GM12878 (cell line): ENCODE measurements at regions of chr19 and their contacts with region 1.

Region 1: DNA sequence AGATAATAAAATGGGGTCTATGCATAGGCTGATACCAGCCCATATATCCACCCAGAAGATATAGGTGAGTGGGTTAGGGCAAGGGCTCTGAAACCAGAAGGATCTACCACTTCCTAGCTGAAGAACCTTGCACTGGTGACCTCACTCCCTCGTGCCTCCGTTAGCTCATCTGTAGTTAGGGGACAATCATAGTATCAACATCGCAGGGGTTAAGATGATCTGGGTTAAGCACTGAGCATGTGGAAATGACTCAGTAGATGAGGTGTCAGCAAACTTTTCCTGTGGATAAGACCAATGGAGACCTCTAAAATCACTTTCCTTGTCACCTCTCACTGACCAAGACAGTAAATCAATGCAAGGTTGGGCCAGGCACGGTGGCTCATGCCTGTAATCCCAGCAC is 30.5 kb downstream of the TNFSF14 start:
- DNase-seq: no peak
- ATAC-seq: peak; percentile 17
- H3K4me3 ChIP-seq: no peak overlapping the region
- H3K27ac ChIP-seq: peak overlapping the region; percentile 13
- H3K4me1 ChIP-seq: peaks cover 30% of the 10 kb centered on the region
- H3K27me3 ChIP-seq: no peaks in the 10 kb centered on the region
- CTCF ChIP-seq: no peak
- EP300 ChIP-seq: no peak
- POLR2A ChIP-seq: no peak
- RAD21 ChIP-seq: no peak

Region 2: GRCh38 chr19:6510618-6511017 is 128.8 kb before region 1 on chr19:
- CTCF ChIA-PET with region 1: no interaction called
- POLR2A ChIA-PET with region 1: no interaction called
- RAD21 ChIA-PET with region 1: no interaction called
- SMC1A ChIA-PET with region 1: no interaction called
- in situ Hi-C with region 1: no loop called
- intact Hi-C with region 1: no loop called
- DNase-seq: no peak
- ATAC-seq: no peak
- H3K4me3 ChIP-seq: no peak overlapping the region
- H3K27ac ChIP-seq: no peak overlapping the region
- H3K4me1 ChIP-seq: 0 out of 2 replicates have a peak, but pooled peaks cover 3% of the 10 kb centered on the region
- H3K27me3 ChIP-seq: no peaks in the 10 kb centered on the region
- CTCF ChIP-seq: no peak
- EP300 ChIP-seq: no peak
- POLR2A ChIP-seq: no peak
- RAD21 ChIP-seq: no peak

Region 3: GRCh38 chr19:6654347-6655310 is 15.2 kb after region 1 on chr19:
- CTCF ChIA-PET with region 1: interaction called, 4 read pairs
- POLR2A ChIA-PET with region 1: interaction called, 20 read pairs
- RAD21 ChIA-PET with region 1: interaction called, 10 read pairs
- SMC1A ChIA-PET with region 1: interaction called, 58 read pairs
- in situ Hi-C with region 1: no loop called
- intact Hi-C with region 1: no loop called
- DNase-seq: no peak
- ATAC-seq: peak; percentile 91
- H3K4me3 ChIP-seq: peak overlapping the region; percentile 37; the same call in 1 of the 2 replicates
- H3K27ac ChIP-seq: peak overlapping the region; percentile 85
- H3K4me1 ChIP-seq: peaks cover 17% of the 10 kb centered on the region
- H3K27me3 ChIP-seq: no peaks in the 10 kb centered on the region
- CTCF ChIP-seq: no peak
- EP300 ChIP-seq: no peak
- POLR2A ChIP-seq: no peak
- RAD21 ChIP-seq: no peak

Region 4: GRCh38 chr19:6663236-6664201 is 24.1 kb after region 1 on chr19:
- CTCF ChIA-PET with region 1: interaction called, 9 read pairs
- POLR2A ChIA-PET with region 1: interaction called, 8 read pairs
- RAD21 ChIA-PET with region 1: interaction called, 41 read pairs
- SMC1A ChIA-PET with region 1: interaction called, 14 read pairs
- in situ Hi-C with region 1: no loop called
- intact Hi-C with region 1: no loop called
- DNase-seq: no peak
- ATAC-seq: peak; percentile 8; the same call in 2 of the 3 replicates
- H3K4me3 ChIP-seq: no peak overlapping the region
- H3K27ac ChIP-seq: peak overlapping the region; percentile 40; the same call in 1 of the 2 replicates
- H3K4me1 ChIP-seq: peaks cover 26% of the 10 kb centered on the region
- H3K27me3 ChIP-seq: no peaks in the 10 kb centered on the region
- CTCF ChIP-seq: no peak
- EP300 ChIP-seq: no peak
- POLR2A ChIP-seq: no peak; the same call in 1 of the 2 replicates
- RAD21 ChIP-seq: no peak

Region 5: GRCh38 chr19:6668691-6669090 is 29.3 kb after region 1 on chr19:
- CTCF ChIA-PET with region 1: interaction called, 7 read pairs
- POLR2A ChIA-PET with region 1: interaction called, 10 read pairs
- RAD21 ChIA-PET with region 1: interaction called, 41 read pairs
- SMC1A ChIA-PET with region 1: interaction called, 20 read pairs
- in situ Hi-C with region 1: no loop called
- intact Hi-C with region 1: loop called (anchors 2 kb)
- DNase-seq: no peak
- ATAC-seq: peak; percentile 7
- H3K4me3 ChIP-seq: peak overlapping the region; percentile 74
- H3K27ac ChIP-seq: peak overlapping the region; percentile 81
- H3K4me1 ChIP-seq: peaks cover 16% of the 10 kb centered on the region
- H3K27me3 ChIP-seq: no peaks in the 10 kb centered on the region
- CTCF ChIP-seq: no peak
- EP300 ChIP-seq: no peak
- POLR2A ChIP-seq: no peak
- RAD21 ChIP-seq: no peak

Region 6: GRCh38 chr19:6674868-6675305 is 35.4 kb after region 1 on chr19:
- CTCF ChIA-PET with region 1: interaction called, 7 read pairs
- POLR2A ChIA-PET with region 1: interaction called, 10 read pairs
- RAD21 ChIA-PET with region 1: interaction called, 41 read pairs
- SMC1A ChIA-PET with region 1: interaction called, 20 read pairs
- in situ Hi-C with region 1: no loop called
- intact Hi-C with region 1: loop called (anchors 2 kb)
- DNase-seq: peak; percentile 87
- ATAC-seq: peak; percentile 75
- H3K4me3 ChIP-seq: peak overlapping the region; percentile 40; the same call in 1 of the 2 replicates
- H3K27ac ChIP-seq: peak overlapping the region; percentile 69
- H3K4me1 ChIP-seq: peaks cover 35% of the 10 kb centered on the region
- H3K27me3 ChIP-seq: no peaks in the 10 kb centered on the region
- CTCF ChIP-seq: peak in 2 of 3 experiments; percentile 30 to 36; a peak in 4 of 6 replicates
- EP300 ChIP-seq: peak; percentile 75 to 83
- POLR2A ChIP-seq: 0 out of 2 replicates have a peak, but pooled peaks have one; percentile 37
- RAD21 ChIP-seq: peak; percentile 23; the same call in 1 of the 2 replicates

Region 7: GRCh38 chr19:6705931-6706632 is 66.6 kb after region 1 on chr19:
- CTCF ChIA-PET with region 1: no interaction called
- POLR2A ChIA-PET with region 1: no interaction called
- RAD21 ChIA-PET with region 1: no interaction called
- SMC1A ChIA-PET with region 1: no interaction called
- in situ Hi-C with region 1: no loop called
- intact Hi-C with region 1: no loop called
- DNase-seq: no peak
- ATAC-seq: no peak
- H3K4me3 ChIP-seq: no peak overlapping the region
- H3K27ac ChIP-seq: no peak overlapping the region
- H3K4me1 ChIP-seq: no peaks in the 10 kb centered on the region
- H3K27me3 ChIP-seq: no peaks in the 10 kb centered on the region; a peak in 2 of 4 replicates
- CTCF ChIP-seq: no peak
- EP300 ChIP-seq: no peak
- POLR2A ChIP-seq: no peak
- RAD21 ChIP-seq: no peak